ENCODE measurements at regions of chr10 and their contacts with region 1.

Region 1: DNA sequence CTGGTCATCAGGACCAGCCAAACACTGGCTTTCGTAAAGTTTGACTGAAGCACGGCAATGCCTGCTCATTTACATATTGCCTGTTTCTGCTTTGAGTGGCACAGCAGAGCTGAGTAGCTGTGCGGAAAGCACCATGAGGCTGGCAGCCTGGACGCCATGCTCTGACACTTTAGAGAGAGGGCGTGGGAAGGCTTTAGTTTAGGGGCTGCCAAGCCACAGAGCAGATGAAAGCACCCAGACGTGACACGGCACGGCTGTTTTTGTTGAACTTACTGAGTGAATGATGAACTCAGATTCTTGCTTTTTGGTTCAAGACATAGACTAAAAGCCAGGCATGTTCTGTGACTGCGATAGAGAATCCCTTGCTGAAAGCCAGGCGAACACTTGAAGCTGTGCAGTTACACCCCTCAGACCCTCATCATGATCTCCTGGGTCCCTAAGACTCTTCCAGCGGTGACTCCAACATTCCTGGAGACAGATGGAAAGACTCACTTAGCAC is 182.1 kb downstream of the ZMYND11 start:
- DNase-seq: peak; percentile 42
- ATAC-seq: peak; percentile 99
- H3K4me3 Mint-ChIP-seq: peak overlapping the region; percentile 71
- H3K27ac Mint-ChIP-seq: peak overlapping the region; percentile 92
- H3K4me1 Mint-ChIP-seq: peaks cover 64% of the 10 kb centered on the region
- H3K27me3 Mint-ChIP-seq: no peaks in the 10 kb centered on the region
- CTCF ChIP-seq: no peak

Region 2: GRCh38 chr10:135601-136464 is 181.5 kb before region 1 on chr10:
- CTCF ChIA-PET with region 1: no interaction called
- POLR2A ChIA-PET with region 1: no interaction called
- intact Hi-C with region 1: loop called (anchors 2 kb)
- DNase-seq: peak; percentile 73
- ATAC-seq: peak; percentile 51
- H3K4me3 Mint-ChIP-seq: peak overlapping the region; percentile 77
- H3K27ac Mint-ChIP-seq: peak overlapping the region; percentile 60
- H3K4me1 Mint-ChIP-seq: peaks cover 28% of the 10 kb centered on the region
- H3K27me3 Mint-ChIP-seq: peaks cover 4% of the 10 kb centered on the region
- CTCF ChIP-seq: no peak

Region 3: DNA sequence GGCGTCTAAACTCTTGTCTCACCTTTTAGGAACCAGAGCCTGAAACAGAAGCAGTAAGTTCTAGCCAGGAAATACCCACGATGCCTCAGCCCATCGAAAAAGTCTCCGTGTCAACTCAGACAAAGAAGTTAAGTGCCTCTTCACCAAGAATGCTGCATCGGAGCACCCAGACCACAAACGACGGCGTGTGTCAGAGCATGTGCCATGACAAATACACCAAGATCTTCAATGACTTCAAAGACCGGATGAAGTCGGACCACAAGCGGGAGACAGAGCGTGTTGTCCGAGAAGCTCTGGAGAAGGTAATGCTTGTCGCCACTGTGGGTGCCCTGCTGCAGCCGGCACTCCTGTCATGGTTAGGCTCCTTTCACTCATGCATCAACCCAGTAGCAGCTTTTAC is 69.0 kb before region 1 on chr10:
- CTCF ChIA-PET with region 1: no interaction called
- POLR2A ChIA-PET with region 1: no interaction called
- intact Hi-C with region 1: no loop called
- DNase-seq: no peak
- ATAC-seq: no peak
- H3K4me3 Mint-ChIP-seq: no peak overlapping the region
- H3K27ac Mint-ChIP-seq: no peak overlapping the region
- H3K4me1 Mint-ChIP-seq: no peaks in the 10 kb centered on the region
- H3K27me3 Mint-ChIP-seq: no peaks in the 10 kb centered on the region
- CTCF ChIP-seq: no peak

Region 4: DNA sequence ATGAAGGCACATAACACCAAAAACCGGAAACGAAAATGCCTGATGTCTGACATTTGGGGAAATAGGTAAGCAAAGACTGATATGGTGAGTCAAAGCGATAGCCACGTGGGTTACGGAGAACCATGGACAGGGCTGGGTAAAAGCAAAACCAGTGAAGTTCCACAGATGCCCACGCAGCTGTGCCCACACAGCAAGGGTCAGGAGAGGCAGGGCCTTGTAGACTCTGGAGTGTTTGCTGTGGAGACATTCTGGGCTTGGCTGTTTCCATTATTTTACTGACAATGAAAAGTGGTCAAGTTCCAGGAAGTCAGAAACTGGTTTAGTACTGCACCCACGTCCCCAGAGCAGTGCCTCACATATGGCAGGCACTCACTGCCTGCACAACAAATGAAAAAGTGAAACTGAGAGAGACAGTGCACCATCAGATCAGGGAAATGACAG is 33.4 kb before region 1 on chr10:
- CTCF ChIA-PET with region 1: no interaction called
- POLR2A ChIA-PET with region 1: interaction called, 3 read pairs
- intact Hi-C with region 1: loop called (anchors 5 kb)
- DNase-seq: no peak
- ATAC-seq: peak; percentile 92
- H3K4me3 Mint-ChIP-seq: peak overlapping the region; percentile 39
- H3K27ac Mint-ChIP-seq: peak overlapping the region; percentile 73
- H3K4me1 Mint-ChIP-seq: peaks cover 19% of the 10 kb centered on the region
- H3K27me3 Mint-ChIP-seq: no peaks in the 10 kb centered on the region
- CTCF ChIP-seq: no peak

Region 5: DNA sequence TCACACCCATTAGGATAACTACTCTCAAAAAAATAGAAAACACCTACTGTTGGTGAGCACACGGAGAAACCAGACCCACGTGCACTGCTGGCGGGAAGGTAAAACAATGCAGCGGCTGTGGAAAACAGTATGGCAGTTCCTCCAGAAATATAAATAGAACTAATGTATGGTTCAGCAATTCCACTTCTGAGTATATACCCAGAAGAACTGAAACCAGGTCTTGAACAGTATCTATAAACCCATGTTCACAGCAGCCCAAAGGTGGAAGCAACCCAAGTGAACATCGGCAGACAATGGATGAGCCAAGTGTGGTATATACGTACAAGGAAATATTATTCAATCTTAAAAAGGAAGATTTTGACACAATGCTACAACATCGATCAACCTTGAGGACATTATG is 17.4 kb before region 1 on chr10:
- CTCF ChIA-PET with region 1: no interaction called
- POLR2A ChIA-PET with region 1: interaction called, 5 read pairs
- intact Hi-C with region 1: loop called (anchors 1 kb)
- DNase-seq: no peak
- ATAC-seq: peak; percentile 88
- H3K4me3 Mint-ChIP-seq: peak overlapping the region; percentile 81
- H3K27ac Mint-ChIP-seq: peak overlapping the region; percentile 79
- H3K4me1 Mint-ChIP-seq: peaks cover 43% of the 10 kb centered on the region
- H3K27me3 Mint-ChIP-seq: no peaks in the 10 kb centered on the region
- CTCF ChIP-seq: no peak

Region 6: DNA sequence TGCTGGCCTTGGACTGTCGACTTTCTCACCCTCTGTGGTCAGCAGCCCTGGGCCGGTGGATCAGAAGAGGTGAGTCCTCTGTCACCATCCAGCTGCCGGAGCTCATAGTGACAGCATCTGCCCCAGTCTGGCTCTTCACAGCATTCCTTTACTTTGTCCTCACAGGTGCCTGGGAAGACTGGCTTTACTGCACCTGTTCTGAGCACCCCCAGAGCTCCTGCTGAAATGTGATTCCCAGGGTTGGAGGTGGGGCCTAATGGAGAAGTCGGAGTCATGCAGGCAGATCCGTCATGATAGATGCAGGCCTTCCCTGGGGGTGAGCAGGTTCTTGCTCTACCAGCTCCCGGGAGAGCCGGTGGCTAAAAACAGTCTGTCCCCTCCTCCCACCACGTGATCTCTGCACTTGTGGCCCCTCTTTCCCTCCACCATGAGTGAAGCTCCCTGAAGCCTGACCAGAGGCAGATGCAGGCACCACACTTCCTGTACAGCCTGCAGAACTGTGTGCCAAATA is 10.6 kb before region 1 on chr10:
- CTCF ChIA-PET with region 1: interaction called, 4 read pairs
- POLR2A ChIA-PET with region 1: interaction called, 23 read pairs
- intact Hi-C with region 1: loop called (anchors 1 kb)
- DNase-seq: no peak
- ATAC-seq: peak; percentile 83
- H3K4me3 Mint-ChIP-seq: peak overlapping the region; percentile 61
- H3K27ac Mint-ChIP-seq: peak overlapping the region; percentile 90
- H3K4me1 Mint-ChIP-seq: peaks cover 71% of the 10 kb centered on the region
- H3K27me3 Mint-ChIP-seq: no peaks in the 10 kb centered on the region
- CTCF ChIP-seq: no peak

Region 7: GRCh38 chr10:329361-330099 is 12.2 kb after region 1 on chr10:
- CTCF ChIA-PET with region 1: no interaction called
- POLR2A ChIA-PET with region 1: interaction called, 5 read pairs
- intact Hi-C with region 1: loop called (anchors 1 kb)
- DNase-seq: no peak
- ATAC-seq: no peak
- H3K4me3 Mint-ChIP-seq: no peak overlapping the region
- H3K27ac Mint-ChIP-seq: no peak overlapping the region
- H3K4me1 Mint-ChIP-seq: peaks cover 51% of the 10 kb centered on the region
- H3K27me3 Mint-ChIP-seq: peaks cover 2% of the 10 kb centered on the region
- CTCF ChIP-seq: no peak

Region 8: DNA sequence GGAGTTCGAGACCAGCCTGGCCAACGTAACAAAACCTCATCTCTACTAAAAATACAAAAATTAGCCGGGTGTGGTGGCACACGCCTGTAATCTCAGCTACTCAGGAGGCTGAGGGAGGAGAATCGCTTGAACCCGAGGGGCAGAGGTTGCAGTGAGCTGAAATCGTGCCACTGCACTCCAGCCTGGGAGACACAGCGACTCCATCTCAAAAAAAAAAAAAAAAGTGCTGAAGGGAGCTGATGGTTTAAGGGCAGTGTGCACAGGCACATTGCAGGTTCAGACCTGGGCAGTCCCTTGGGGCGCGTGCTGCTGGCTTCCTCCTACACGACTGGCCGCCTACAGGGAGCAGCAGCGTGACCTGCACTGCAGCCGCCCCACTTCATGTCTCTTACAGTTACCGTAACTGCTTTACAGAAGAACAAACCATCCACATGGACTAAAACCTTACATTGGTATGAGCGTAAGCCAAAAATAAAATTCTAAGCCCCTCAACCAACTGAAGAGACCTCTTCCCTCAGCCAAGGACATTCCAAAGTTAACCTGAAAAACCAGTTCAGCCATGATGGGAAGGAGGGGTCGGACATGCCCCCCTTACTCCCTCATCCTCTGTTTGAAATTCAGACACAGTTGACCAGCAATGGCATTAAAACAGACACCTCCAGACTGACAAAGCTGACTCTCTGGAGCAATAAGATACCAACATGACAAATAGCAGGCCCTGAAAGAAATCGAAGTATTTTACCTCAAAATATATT is 80.2 kb after region 1 on chr10:
- CTCF ChIA-PET with region 1: no interaction called
- POLR2A ChIA-PET with region 1: no interaction called
- intact Hi-C with region 1: no loop called
- DNase-seq: no peak
- ATAC-seq: no peak
- H3K4me3 Mint-ChIP-seq: no peak overlapping the region
- H3K27ac Mint-ChIP-seq: no peak overlapping the region
- H3K4me1 Mint-ChIP-seq: peaks cover 6% of the 10 kb centered on the region
- H3K27me3 Mint-ChIP-seq: peaks cover 2% of the 10 kb centered on the region
- CTCF ChIP-seq: no peak

Region 9: DNA sequence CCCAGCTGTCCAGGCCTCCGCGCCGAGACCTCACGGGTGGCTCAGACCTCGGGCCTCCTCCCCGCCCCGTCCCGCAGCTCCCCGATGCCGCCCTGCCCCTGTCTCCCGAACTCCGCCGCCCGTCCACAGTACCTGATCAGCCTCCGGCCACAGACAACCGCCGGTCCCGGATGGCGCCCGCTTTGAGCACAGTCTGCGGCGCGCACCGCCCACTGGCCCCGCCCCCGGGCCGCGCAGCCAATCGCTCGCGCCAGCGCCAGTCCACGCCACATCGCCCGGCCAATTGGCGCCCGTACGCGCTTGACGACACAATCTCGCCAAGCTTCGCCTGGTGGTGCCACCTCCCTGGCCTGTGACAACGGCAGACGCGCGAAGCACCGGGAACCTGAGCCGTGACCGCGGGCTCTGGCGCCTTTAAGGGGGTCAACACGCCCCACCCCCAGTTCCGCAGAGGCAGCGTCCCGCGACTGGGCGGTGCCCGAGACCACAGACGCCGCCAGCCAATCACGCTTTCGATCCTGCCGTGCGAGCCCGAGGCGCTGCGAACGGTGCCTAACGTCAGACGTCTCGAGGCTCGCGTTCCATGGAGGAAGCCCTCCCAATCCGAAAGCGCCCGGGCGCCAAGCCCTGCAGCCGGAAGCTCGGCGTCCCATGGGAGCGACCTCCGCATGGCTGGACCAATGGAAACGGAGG is 731.6 kb after region 1 on chr10 and contains the start of gene IDI1:
- CTCF ChIA-PET with region 1: no interaction called
- POLR2A ChIA-PET with region 1: no interaction called
- intact Hi-C with region 1: loop called (anchors 5 kb)
- DNase-seq: peak; percentile 96
- ATAC-seq: peak; percentile 77
- H3K4me3 Mint-ChIP-seq: peak within 1 kb of the TSS; percentile 94
- H3K27ac Mint-ChIP-seq: peak within 1 kb of the TSS; percentile 98
- H3K4me1 Mint-ChIP-seq: peaks cover 71% of the 10 kb centered on the region
- H3K27me3 Mint-ChIP-seq: no peaks in the 10 kb centered on the region
- CTCF ChIP-seq: no peak
- total RNA-seq, gene IDI1: 75.8 and 79.8 TPM in 2 replicates